ENCODE measurements at regions of chr10 and their contacts with region 1.

Region 1: GRCh38 chr10:72095195-72095594 is 6.8 kb upstream of the SPOCK2 start:
- DNase-seq: no peak
- ATAC-seq: no peak
- H3K4me3 ChIP-seq: no peak overlapping the region
- H3K27ac ChIP-seq: no peak overlapping the region; the same call in 1 of the 2 replicates
- H3K4me1 ChIP-seq: peaks cover 40% of the 10 kb centered on the region
- H3K27me3 ChIP-seq: no peaks in the 10 kb centered on the region
- CTCF ChIP-seq: no peak

Region 2: GRCh38 chr10:72081773-72082590 is 13.2 kb before region 1 on chr10:
- CTCF ChIA-PET with region 1: no interaction called
- POLR2A ChIA-PET with region 1: interaction called, 17 read pairs
- in situ Hi-C with region 1: no loop called
- intact Hi-C with region 1: no loop called
- DNase-seq: no peak
- ATAC-seq: 0 out of 2 replicates have a peak, but pooled peaks have one; percentile 8
- H3K4me3 ChIP-seq: no peak overlapping the region
- H3K27ac ChIP-seq: no peak overlapping the region
- H3K4me1 ChIP-seq: peaks cover 29% of the 10 kb centered on the region
- H3K27me3 ChIP-seq: no peaks in the 10 kb centered on the region
- CTCF ChIP-seq: no peak

Measured in Panc1 (cell line).